Activated CD4-positive, alpha-beta memory T cell treated with anti-CD3 and anti-CD28 coated beads, Interleukin-2, amount 10 ng/mL, durations not matched to agents 7 days and 5 days (primary cell): ENCODE measurements at regions of chr18 and their contacts with region 1.

Region 1: GRCh38 chr18:35949903-35950627 is 22.4 kb upstream of the RMP24 start:
- DNase-seq: peak; percentile 44
- H3K4me3 Mint-ChIP-seq: peak overlapping the region; percentile 66
- H3K27ac Mint-ChIP-seq: no peak overlapping the region
- H3K4me1 Mint-ChIP-seq: peaks cover 8% of the 10 kb centered on the region
- H3K27me3 Mint-ChIP-seq: peaks cover 17% of the 10 kb centered on the region

Region 2: DNA sequence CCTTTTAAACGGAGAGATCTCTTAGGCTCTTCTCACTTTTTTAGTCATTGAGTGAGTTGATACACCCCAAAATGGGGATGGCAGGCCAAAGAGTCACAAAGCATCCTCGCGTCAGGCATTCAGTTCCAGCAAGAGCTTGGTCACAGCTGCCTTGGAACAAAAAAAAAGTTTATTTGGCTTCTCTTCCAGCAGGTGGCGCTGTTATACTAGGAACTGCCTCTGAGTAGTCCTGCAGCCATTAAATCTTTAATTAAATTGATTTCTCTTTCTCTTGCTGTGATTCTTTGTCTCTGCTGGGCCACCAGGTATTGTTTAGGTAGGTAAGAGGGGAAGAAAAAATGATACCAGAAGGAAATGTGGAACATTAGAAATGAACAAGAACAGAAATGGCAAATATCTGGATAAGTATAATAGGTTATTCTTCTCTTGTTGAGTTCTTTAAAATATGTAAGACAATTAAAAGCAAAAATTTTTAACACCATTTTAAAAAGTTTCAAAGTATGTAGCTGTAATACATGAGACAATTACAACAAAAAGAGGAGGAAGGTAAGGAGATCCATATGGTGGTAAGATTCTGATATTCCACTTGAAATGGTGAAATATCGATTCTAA is 193.5 kb before region 1 on chr18:
- CTCF ChIA-PET with region 1: interaction called, 16 read pairs
- POLR2A ChIA-PET with region 1: no interaction called
- DNase-seq: peak; percentile 53
- H3K4me3 Mint-ChIP-seq: no peak overlapping the region
- H3K27ac Mint-ChIP-seq: no peak overlapping the region
- H3K4me1 Mint-ChIP-seq: no peaks in the 10 kb centered on the region
- H3K27me3 Mint-ChIP-seq: peaks cover 21% of the 10 kb centered on the region